Calu3 (cell line): ENCODE measurements at regions of chr14 and their contacts with region 1.

Region 1: DNA sequence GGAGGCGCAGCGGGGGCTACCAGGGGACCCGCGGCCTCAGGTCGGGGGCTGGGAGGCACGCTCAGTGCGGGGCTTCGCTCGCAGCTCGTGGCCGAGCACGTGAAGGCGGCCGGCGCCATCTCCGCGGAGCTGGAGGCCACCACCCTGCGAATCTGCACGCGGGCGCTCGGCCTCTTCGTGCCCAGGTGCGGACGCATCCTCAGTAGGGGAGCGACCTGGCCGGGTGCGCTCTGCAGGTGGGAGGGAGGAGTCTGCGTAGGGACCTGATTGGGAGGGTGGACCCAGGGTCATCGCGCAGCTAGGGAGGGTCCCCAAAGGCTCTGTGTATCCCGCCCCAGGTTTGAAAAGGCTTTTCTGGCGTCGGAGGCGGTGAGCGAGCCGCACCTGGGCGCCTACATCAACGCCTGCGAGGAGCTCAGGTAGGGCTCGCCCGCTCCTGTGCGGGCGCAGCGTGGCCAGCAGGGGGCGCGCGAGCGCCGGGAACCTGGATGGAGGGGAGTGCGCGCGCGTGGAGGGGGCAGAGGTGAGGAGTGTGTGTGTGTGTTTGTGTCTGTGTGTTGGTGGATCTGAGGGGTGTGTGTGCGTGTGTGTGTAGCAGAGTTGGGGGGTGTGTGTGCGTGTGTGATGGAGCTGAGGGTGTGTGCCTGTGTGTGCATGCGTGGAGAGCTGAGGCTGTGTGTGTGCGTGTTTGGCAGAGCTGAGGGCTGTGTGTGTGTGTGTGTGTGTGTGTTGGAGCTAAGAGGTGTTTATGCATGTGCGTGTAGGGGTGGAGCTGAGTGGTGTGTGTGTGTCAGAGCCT is 10.3 kb downstream of the EXOC3L4 start:
- DNase-seq: peak; percentile 85
- H3K4me3 Mint-ChIP-seq: peak overlapping the region; percentile 72
- H3K27ac Mint-ChIP-seq: peak overlapping the region; percentile 47
- H3K4me1 Mint-ChIP-seq: peaks cover 17% of the 10 kb centered on the region
- H3K27me3 Mint-ChIP-seq: no peaks in the 10 kb centered on the region
- CTCF ChIP-seq: peak; percentile 97

Region 2: DNA sequence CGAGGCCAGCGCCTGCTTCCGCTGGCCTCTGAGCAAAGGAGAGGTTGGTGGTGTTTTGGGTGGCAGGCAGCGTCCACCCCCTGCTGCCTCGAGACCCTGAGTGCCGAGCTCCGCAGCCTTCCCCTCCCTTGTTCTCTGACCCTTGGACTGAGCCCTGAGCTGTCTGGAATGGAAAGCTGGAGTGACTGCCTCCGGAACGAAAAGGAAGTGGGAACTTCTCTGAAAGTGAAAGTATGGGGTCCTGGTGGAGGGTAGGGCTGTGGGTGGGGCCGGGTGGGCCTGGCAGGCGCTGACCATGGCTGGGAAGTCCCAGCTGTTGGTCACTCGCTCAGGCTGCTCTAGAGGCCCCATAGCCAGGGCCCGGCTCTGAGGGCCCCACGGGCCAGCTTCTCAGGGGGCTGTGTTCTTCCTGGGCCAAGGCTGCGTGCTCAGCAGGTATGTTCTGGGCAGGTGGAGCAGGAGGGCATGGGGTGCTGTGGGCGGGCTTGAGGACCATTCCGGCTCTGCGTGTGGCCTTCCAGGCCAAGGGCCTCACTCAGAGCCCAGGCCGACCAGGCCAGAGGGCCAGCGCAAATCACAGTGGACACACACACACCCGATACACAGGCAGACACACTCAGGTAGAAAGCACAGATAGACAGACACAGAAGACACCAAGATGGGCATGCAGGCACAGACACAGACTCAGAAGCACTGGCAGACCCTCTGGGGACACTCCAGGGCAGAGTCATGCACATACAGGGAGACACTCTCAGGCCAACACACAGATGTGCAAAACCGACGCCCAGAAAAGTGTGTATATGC is 10.2 kb before region 1 on chr14 and contains the start of gene EXOC3L4:
- CTCF ChIA-PET with region 1: interaction called, 27 read pairs
- intact Hi-C with region 1: no loop called
- DNase-seq: no peak
- H3K4me3 Mint-ChIP-seq: peak within 1 kb of the TSS; percentile 70
- H3K27ac Mint-ChIP-seq: peak within 1 kb of the TSS; percentile 12
- H3K4me1 Mint-ChIP-seq: peaks cover 15% of the 10 kb centered on the region
- H3K27me3 Mint-ChIP-seq: no peaks in the 10 kb centered on the region
- CTCF ChIP-seq: no peak
- total RNA-seq, gene EXOC3L4: 10.9 and 13.5 TPM in 2 replicates

Region 3: GRCh38 chr14:103185051-103185992 is 80.5 kb after region 1 on chr14:
- CTCF ChIA-PET with region 1: interaction called, 20 read pairs
- intact Hi-C with region 1: loop called (anchors 1 kb)
- DNase-seq: peak; percentile 31
- H3K4me3 Mint-ChIP-seq: peak overlapping the region; percentile 17
- H3K27ac Mint-ChIP-seq: peak overlapping the region; percentile 89
- H3K4me1 Mint-ChIP-seq: peaks cover 25% of the 10 kb centered on the region
- H3K27me3 Mint-ChIP-seq: no peaks in the 10 kb centered on the region
- CTCF ChIP-seq: peak; percentile 69

Region 4: DNA sequence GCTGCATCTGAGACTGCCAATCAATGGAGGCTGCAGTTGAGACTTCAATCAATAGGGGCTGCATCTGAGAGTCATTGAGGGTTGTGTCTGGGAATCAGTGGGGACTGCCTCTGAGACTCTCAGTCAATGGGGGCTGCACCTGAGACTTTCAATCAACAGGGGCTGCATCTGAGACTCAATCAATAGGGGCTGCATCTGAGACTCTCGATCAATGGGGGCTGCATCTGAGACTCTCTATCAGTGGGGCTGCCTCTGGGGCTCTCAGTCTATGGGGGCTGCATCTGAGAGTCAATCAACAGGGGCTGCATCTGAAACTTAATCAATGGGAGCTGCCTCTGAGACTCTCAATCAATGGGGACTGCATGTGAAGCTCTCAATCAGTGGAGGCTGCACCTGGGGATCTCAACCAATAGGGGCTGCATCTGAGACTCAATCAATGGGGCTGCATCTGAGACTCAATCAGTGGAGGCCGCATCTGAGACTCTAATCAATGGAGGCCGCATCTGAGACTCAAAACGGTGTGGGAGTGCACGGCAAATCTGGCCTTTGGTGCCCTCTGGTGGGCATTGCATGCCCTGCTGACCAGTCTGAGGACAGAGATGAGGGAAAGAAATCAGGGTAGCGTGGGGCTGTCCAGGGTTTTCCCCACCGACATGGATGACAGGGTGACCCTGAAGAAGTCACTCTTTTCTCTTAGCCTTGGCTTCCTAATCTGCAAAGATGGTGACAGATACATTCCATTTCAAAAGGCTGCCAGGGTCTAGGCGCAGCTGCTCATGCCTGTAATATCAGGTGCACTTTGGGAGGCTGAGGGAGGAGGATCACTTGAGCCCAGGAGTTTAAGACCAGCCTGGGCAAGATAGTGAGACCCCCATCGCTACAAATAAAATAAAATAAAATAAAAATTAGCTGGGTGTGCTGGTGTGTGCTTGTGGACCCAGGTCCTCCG is 187.8 kb after region 1 on chr14:
- CTCF ChIA-PET with region 1: interaction called, 17 read pairs
- intact Hi-C with region 1: loop called (anchors 1 kb)
- DNase-seq: peak; percentile 88
- H3K4me3 Mint-ChIP-seq: no peak overlapping the region
- H3K27ac Mint-ChIP-seq: no peak overlapping the region
- H3K4me1 Mint-ChIP-seq: peaks cover 8% of the 10 kb centered on the region
- H3K27me3 Mint-ChIP-seq: no peaks in the 10 kb centered on the region
- CTCF ChIP-seq: peak; percentile 89